A549 (cell line): ENCODE measurements at regions of chr19 and their contacts with region 1.

Region 1: GRCh38 chr19:38849860-38850435 is at the start of gene HNRNPL:
- DNase-seq: no peak
- ATAC-seq: peak; percentile 60 to 79
- H3K4me3 ChIP-seq: peak within 1 kb of the TSS; percentile 69
- H3K27ac ChIP-seq: peak within 1 kb of the TSS; percentile 93 to 96
- H3K4me1 ChIP-seq: peaks cover 44% of the 10 kb centered on the region
- CTCF ChIP-seq: peak; percentile 40; the same call in 2 of the 3 replicates
- EP300 ChIP-seq: no peak
- POLR2A ChIP-seq: peak; percentile 90
- RAD21 ChIP-seq: no peak; a peak in 1 of 5 replicates
- polyA plus RNA-seq, gene HNRNPL: 440 and 487 TPM in 2 replicates

Region 2: DNA sequence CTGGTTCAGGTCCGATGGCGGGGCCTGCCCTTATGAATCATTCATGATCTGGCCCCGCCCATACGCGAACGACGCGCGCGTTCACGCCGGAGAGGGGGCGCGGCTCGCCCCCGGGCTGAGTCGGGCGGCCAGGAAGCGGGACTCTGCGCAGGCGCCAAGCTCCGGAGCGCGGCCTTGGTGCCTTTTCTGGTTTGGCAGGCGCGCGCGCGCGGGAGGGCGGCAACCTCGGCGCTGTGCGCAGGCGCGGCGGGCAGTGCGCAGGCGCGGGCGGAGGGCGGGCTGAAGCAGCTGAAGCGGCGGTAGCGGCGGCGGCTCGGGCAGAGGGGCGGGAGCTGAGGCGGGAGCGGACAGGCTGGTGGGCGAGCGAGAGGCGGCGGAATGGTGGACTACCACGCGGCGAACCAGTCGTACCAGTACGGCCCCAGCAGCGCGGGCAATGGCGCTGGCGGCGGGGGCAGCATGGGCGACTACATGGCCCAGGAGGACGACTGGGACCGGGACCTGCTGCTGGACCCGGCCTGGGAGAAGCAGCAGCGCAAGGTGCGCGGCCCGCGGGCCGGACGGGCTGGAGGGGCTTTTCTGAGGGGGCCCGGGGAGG is 202.5 kb before region 1 on chr19 and contains the start of gene ACTN4:
- CTCF ChIA-PET with region 1: no interaction called
- POLR2A ChIA-PET with region 1: interaction called, 10 read pairs
- DNase-seq: peak; percentile 99
- ATAC-seq: peak; percentile 65 to 68
- H3K4me3 ChIP-seq: peak within 1 kb of the TSS; percentile 85
- H3K27ac ChIP-seq: peak within 1 kb of the TSS; percentile 87 to 91
- H3K4me1 ChIP-seq: peaks cover 38% of the 10 kb centered on the region
- CTCF ChIP-seq: no peak
- EP300 ChIP-seq: no peak; a peak in 1 of 5 replicates
- POLR2A ChIP-seq: peak; percentile 100
- RAD21 ChIP-seq: peak in 1 of 2 experiments; percentile 50; a peak in 2 of 5 replicates
- polyA plus RNA-seq, gene ACTN4: 605 and 614 TPM in 2 replicates

Region 3: GRCh38 chr19:38769635-38770211 is 80.2 kb before region 1 on chr19:
- CTCF ChIA-PET with region 1: interaction called, 14 read pairs
- POLR2A ChIA-PET with region 1: no interaction called
- DNase-seq: peak; percentile 77 to 85
- ATAC-seq: peak; percentile 67 to 89
- H3K4me3 ChIP-seq: no peak overlapping the region
- H3K27ac ChIP-seq: peak overlapping the region; percentile 28 to 62; a peak in 4 of 6 replicates
- H3K4me1 ChIP-seq: no peaks in the 10 kb centered on the region; the same call in 2 of the 3 replicates
- CTCF ChIP-seq: peak; percentile 61
- EP300 ChIP-seq: no peak
- POLR2A ChIP-seq: no peak; the same call in 1 of the 2 replicates
- RAD21 ChIP-seq: peak; percentile 64 to 71

Region 4: GRCh38 chr19:38838573-38839269 is 11.2 kb before region 1 on chr19:
- CTCF ChIA-PET with region 1: interaction called, 21 read pairs
- POLR2A ChIA-PET with region 1: interaction called, 62 read pairs
- DNase-seq: peak in 1 of 2 experiments; percentile 62
- ATAC-seq: peak; percentile 6 to 8; a peak in 4 of 6 replicates
- H3K4me3 ChIP-seq: no peak overlapping the region
- H3K27ac ChIP-seq: peak overlapping the region; percentile 36 to 76; a peak in 4 of 6 replicates
- H3K4me1 ChIP-seq: peaks cover 92% of the 10 kb centered on the region
- CTCF ChIP-seq: no peak
- EP300 ChIP-seq: no peak
- POLR2A ChIP-seq: no peak
- RAD21 ChIP-seq: 0 out of 5 replicates have a peak, but pooled peaks of 1 of the 2 experiments have one; percentile 26

Region 5: DNA sequence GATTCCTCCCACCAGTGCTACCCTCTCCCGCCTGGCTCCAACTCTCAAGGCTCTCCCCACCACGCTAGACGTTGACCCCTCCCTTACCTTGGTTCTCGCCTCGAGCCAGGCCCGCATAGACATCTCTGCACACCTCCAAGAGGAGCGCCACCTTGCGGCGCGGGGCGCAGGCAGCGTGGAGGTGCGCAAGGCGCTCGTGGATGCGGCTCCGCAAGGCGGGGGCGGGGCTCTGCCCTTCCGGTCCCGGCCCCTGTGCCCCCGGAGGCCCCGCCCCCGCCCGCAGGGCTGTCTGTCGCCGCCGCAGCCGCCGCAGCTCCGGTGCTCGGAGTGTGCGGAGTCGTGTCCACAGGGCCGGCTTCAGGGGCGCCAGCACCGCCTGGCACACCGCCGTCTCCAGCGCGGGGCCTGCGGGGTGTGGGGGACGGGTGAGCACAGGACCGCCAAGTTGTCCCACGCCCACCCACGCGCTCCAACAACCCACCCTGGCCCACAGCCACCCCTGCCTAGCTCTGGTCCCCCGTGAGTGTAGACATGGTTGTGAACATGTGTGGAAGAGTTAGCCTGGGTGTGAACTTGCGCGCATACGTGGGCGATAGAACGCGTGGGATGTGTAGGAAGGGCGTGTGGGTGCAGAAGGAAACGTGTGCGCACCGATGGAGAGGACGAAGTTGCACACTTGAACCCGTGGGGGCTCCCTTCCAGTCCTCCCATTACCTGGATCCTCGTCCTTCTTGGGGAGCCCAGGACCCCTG is 20.1 kb after region 1 on chr19:
- CTCF ChIA-PET with region 1: interaction called, 51 read pairs
- POLR2A ChIA-PET with region 1: interaction called, 6 read pairs
- DNase-seq: peak; percentile 89 to 93
- ATAC-seq: peak; percentile 90 to 94
- H3K4me3 ChIP-seq: peak overlapping the region; percentile 31
- H3K27ac ChIP-seq: peak overlapping the region; percentile 56 to 80
- H3K4me1 ChIP-seq: peaks cover 18% of the 10 kb centered on the region
- CTCF ChIP-seq: peak; percentile 99
- EP300 ChIP-seq: no peak
- POLR2A ChIP-seq: no peak; the same call in 1 of the 2 replicates
- RAD21 ChIP-seq: peak; percentile 73 to 88

Region 6: GRCh38 chr19:38891771-38892170 is 41.8 kb after region 1 on chr19:
- CTCF ChIA-PET with region 1: interaction called, 25 read pairs
- POLR2A ChIA-PET with region 1: interaction called, 3 read pairs
- DNase-seq: no peak
- ATAC-seq: no peak
- H3K4me3 ChIP-seq: no peak overlapping the region
- H3K27ac ChIP-seq: no peak overlapping the region
- H3K4me1 ChIP-seq: no peaks in the 10 kb centered on the region
- CTCF ChIP-seq: no peak
- EP300 ChIP-seq: no peak
- POLR2A ChIP-seq: no peak
- RAD21 ChIP-seq: no peak

Region 7: GRCh38 chr19:38917516-38918491 is 67.9 kb after region 1 on chr19:
- CTCF ChIA-PET with region 1: interaction called, 12 read pairs
- POLR2A ChIA-PET with region 1: interaction called, 3 read pairs
- DNase-seq: peak; percentile 75 to 90
- ATAC-seq: peak; percentile 72 to 84
- H3K4me3 ChIP-seq: no peak overlapping the region
- H3K27ac ChIP-seq: peak overlapping the region in 1 of 2 experiments; percentile 14; a peak in 1 of 6 replicates
- H3K4me1 ChIP-seq: 0 out of 3 replicates have a peak, but pooled peaks cover 5% of the 10 kb centered on the region
- CTCF ChIP-seq: peak; percentile 49
- EP300 ChIP-seq: no peak
- POLR2A ChIP-seq: no peak
- RAD21 ChIP-seq: peak; percentile 48 to 59